ENCODE measurements at regions of chr1 and their contacts with region 1.

Region 1: GRCh38 chr1:33295450-33296081 is 25.3 kb downstream of the A3GALT2 start:
- DNase-seq: peak; percentile 76
- ATAC-seq: peak; percentile 89
- H3K4me3 Mint-ChIP-seq: no peak overlapping the region
- H3K27ac Mint-ChIP-seq: no peak overlapping the region
- H3K4me1 Mint-ChIP-seq: no peaks in the 10 kb centered on the region
- H3K27me3 Mint-ChIP-seq: no peaks in the 10 kb centered on the region
- CTCF ChIP-seq: peak; percentile 69

Region 2: DNA sequence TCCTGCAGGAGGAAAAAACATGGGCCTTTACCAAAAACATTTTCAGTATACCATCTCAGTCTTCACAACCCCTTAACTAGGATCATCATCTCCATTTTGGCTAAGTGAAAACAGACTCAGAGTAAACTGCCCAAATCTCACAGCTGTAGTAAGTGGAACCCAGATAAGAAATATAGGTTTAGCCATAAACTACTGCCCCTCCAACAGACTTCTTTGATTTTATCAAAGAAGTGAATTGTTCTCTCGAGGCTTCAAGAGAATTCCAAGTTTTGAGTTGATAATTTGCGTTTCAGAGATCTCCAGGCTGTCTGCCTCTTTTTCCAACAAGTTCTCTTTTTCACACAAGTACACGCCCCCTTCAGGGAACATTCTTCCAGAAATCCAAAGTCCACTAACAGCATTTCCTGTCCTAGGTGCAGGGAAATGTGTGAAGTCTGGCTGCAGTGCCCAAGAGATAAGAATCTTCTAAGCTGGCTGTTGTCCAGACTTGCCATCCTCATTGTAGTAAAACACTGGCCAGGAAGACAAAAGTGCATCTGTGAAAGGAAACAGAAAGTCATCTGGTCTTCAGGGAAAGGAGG is 361.7 kb before region 1 on chr1:
- CTCF ChIA-PET with region 1: interaction called, 4 read pairs
- POLR2A ChIA-PET with region 1: no interaction called
- intact Hi-C with region 1: loop called (anchors 5 kb)
- DNase-seq: no peak
- ATAC-seq: no peak
- H3K4me3 Mint-ChIP-seq: no peak overlapping the region
- H3K27ac Mint-ChIP-seq: no peak overlapping the region
- H3K4me1 Mint-ChIP-seq: peaks cover 4% of the 10 kb centered on the region
- H3K27me3 Mint-ChIP-seq: no peaks in the 10 kb centered on the region
- CTCF ChIP-seq: no peak

Region 3: DNA sequence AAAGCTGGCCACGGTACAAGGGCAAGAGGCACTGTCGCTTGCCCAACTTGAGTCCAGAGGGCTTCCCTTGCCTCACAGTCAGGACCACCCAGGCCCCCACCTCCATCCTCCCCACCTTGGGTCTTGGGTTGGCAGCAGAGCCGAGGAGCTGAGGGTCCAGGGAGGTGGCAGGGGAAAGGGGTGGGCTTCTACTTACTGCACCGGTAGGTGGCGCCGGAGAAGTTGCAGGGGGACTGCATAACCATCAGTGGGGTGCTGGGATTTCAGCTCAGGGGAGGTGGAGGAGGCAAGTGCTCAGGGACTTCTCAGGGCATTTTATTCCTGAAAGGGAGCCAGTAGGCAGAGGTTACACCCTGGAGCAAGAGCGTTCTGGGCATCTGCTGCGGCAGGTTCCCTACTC is 157.8 kb before region 1 on chr1:
- CTCF ChIA-PET with region 1: interaction called, 3 read pairs
- POLR2A ChIA-PET with region 1: no interaction called
- intact Hi-C with region 1: loop called (anchors 5 kb)
- DNase-seq: peak; percentile 22
- ATAC-seq: peak; percentile 62
- H3K4me3 Mint-ChIP-seq: no peak overlapping the region
- H3K27ac Mint-ChIP-seq: no peak overlapping the region
- H3K4me1 Mint-ChIP-seq: peaks cover 2% of the 10 kb centered on the region
- H3K27me3 Mint-ChIP-seq: no peaks in the 10 kb centered on the region
- CTCF ChIP-seq: no peak

Region 4: DNA sequence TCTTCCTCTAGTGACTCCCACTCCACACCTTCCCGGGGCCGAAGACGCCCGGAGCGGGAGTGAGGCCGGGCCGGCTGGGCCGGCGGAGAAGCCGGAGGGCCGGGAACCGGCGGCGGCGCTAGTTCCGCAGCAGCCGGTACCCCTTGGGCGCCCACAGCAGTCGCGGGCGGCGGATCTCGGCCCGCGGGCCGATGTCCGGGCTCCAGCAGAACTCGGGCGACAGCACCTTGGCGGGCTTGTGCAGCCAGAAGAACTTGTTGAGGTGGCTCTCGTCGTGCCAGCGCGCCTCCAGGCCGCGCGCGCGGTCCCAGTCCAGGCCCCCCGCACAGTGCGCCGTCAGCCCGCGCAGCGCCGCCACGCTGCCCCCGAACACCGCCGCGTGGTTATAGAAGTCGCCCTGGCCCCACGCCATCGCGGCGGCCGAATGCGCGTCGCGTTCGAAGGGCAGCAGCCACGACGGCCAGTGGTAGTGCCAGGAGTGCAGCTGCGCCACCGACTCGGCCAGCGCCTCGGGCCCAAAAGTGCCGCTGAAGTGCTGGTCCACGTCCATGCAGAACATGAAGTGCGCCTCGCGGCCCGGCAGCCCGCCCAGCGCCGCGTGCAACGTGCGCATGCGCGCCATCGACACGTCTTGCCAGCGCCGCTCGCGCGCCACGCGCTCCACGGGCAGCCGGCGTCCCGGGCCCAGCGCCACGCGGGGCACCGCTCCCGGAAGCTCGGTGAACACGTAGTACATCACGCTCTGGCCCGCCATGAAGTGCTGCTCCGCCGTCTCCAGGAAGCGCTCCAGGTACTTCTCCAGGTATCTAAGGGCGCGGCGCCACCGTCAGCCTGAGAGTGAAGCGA is 11.3 kb after region 1 on chr1:
- CTCF ChIA-PET with region 1: interaction called, 10 read pairs
- POLR2A ChIA-PET with region 1: no interaction called
- intact Hi-C with region 1: no loop called
- DNase-seq: no peak
- ATAC-seq: no peak
- H3K4me3 Mint-ChIP-seq: no peak overlapping the region
- H3K27ac Mint-ChIP-seq: no peak overlapping the region
- H3K4me1 Mint-ChIP-seq: peaks cover 4% of the 10 kb centered on the region
- H3K27me3 Mint-ChIP-seq: peaks cover 18% of the 10 kb centered on the region
- CTCF ChIP-seq: no peak

Region 5: DNA sequence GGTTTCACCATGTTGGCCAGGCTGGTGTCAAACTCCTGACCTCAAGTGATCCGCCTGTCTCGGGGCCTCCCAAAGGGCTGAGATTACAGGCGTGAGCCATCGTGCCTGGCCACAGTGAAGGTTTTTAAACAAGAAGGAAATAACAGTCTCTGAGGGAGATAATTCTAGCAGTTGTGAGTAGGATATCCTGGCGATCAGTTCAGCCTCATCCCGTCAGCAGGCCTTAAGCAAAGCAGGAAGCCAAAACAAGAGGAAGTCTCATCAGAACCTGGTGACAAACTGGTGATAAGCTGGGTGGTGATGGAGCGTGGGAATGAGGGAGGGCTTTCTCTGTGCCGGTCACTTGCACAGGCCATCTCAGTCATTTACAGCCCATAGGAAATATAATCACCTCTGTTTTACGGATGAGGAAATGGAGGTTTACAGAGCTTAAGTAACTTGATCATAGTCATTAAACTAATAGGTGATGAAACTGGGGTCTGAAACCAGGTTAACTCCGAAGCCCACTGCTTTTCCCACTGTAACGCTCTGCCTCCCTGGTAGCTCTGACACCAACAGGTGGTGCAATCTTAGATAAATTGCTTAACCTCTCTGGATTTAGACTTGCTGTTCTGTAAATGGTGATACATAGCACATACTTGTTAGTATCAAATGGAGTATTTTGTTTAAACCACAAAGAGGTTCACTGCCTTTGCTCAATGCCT is 66.1 kb after region 1 on chr1:
- CTCF ChIA-PET with region 1: interaction called, 57 read pairs
- POLR2A ChIA-PET with region 1: no interaction called
- intact Hi-C with region 1: no loop called
- DNase-seq: no peak
- ATAC-seq: no peak
- H3K4me3 Mint-ChIP-seq: no peak overlapping the region
- H3K27ac Mint-ChIP-seq: no peak overlapping the region
- H3K4me1 Mint-ChIP-seq: peaks cover 3% of the 10 kb centered on the region
- H3K27me3 Mint-ChIP-seq: peaks cover 3% of the 10 kb centered on the region
- CTCF ChIP-seq: no peak

Region 6: DNA sequence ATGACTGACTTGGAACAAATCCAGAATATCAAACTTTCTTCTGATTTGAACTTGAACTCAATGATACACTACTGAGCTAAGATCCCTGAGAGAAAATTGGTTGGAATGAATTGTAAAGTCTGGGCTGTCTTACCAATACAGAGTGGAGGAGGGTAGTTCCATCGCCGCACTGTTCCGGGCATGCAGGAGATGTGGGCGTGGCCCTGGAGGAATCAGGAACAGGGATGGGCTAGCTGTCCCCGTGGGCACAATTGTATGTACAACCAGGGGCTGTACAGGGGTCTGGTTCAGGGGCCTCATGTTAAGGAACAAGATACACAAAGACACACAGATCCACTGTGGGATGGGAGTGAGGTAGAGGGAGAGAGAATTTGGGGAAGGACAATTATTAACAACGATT is 321.2 kb after region 1 on chr1:
- CTCF ChIA-PET with region 1: interaction called, 6 read pairs
- POLR2A ChIA-PET with region 1: no interaction called
- intact Hi-C with region 1: loop called (anchors 2 kb)
- DNase-seq: no peak
- ATAC-seq: no peak
- H3K4me3 Mint-ChIP-seq: no peak overlapping the region
- H3K27ac Mint-ChIP-seq: no peak overlapping the region
- H3K4me1 Mint-ChIP-seq: no peaks in the 10 kb centered on the region
- H3K27me3 Mint-ChIP-seq: peaks cover 28% of the 10 kb centered on the region
- CTCF ChIP-seq: no peak

Region 7: GRCh38 chr1:33893147-33893830 is 597.7 kb after region 1 on chr1:
- CTCF ChIA-PET with region 1: no interaction called
- POLR2A ChIA-PET with region 1: no interaction called
- intact Hi-C with region 1: no loop called
- DNase-seq: no peak
- ATAC-seq: no peak
- H3K4me3 Mint-ChIP-seq: no peak overlapping the region
- H3K27ac Mint-ChIP-seq: no peak overlapping the region
- H3K4me1 Mint-ChIP-seq: no peaks in the 10 kb centered on the region
- H3K27me3 Mint-ChIP-seq: peaks cover 2% of the 10 kb centered on the region
- CTCF ChIP-seq: no peak

Measured in activated B cell treated with CpG ODN at 0.5 μM for 24 hours (primary cell).